ENCODE measurements at regions of chr15 and their contacts with region 1.

Region 1: DNA sequence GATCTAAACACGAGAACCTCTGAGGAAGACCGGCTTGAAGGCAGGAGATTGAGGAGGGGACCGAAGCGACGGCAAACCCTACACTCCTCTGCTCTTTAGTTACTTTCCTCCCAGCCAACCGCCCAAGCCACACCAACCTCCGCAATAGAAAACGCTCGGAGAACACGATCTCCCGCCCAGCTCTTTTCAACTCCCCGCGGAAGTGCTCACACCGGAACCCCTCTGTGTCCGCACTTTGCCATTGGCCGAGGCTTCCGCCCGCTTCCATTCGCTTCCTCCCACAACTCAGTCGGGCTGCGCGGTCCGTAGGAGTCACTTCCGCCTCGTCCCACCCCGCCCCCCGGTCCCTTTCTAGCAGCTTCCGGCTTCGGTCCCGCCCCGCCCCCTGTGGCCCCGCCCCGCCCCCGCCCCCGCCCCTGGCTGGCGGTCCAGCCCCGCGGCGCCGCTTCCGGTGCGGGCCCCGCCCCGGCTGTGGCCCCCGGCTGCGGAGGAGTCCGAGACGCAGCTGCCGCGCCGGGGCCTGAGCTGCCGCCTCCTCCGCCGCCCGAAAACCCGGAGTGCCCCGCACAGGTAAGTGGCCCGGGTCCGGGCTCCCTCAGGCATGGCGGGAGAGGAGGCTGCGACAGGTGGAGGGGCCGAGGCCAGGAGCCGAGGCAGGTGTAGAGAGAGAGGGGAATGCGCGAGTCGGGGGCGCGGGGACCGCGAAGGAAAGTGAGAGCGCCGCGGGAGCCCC is at the start of gene ARID3B:
- DNase-seq: peak; percentile 93
- ATAC-seq: peak; percentile 88
- H3K4me3 ChIP-seq: peak within 1 kb of the TSS; percentile 99
- H3K27ac ChIP-seq: peak within 1 kb of the TSS; percentile 95
- H3K4me1 ChIP-seq: peaks cover 9% of the 10 kb centered on the region
- H3K27me3 ChIP-seq: no peaks in the 10 kb centered on the region
- CTCF ChIP-seq: no peak
- EP300 ChIP-seq: no peak
- POLR2A ChIP-seq: peak; percentile 91
- RAD21 ChIP-seq: no peak
- polyA plus RNA-seq, gene ARID3B: 1.1 to 1.8 TPM

Region 2: DNA sequence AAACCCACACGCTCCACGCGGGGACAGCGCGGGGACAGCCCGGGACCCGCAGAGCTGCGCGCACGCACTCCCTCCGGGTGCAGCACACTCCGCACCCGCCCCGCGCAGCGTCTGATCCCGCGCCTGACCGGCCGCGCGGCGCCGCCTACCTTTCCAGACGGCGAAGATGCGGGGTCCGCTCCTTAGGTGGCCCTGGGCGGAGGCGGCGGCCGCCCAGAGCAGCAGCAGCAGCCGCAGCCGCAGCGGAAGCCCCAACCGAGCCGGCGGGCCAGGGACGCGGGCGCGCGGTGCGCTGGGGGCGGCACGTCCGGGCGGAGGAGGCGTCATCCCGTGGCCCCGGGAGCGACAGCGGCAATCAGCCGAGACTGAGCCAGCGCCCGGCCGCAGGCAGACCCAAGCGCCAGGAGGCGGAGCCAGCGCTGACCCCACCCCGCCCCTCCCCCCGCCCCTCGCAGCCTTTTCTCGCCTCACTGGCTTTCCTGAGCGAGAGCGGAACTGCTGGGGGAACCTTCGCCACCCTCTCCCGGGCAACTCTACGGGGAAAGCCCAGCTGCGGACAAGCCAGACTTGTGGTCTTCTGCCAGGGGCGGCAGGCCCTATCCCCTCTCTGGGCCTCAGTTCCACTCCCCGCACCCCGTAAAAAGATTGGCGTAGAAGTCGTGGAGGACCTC is 107.2 kb before region 1 on chr15 and contains the start of gene SEMA7A:
- CTCF ChIA-PET with region 1: interaction called, 6 read pairs
- POLR2A ChIA-PET with region 1: interaction called, 8 read pairs
- RAD21 ChIA-PET with region 1: interaction called, 3 read pairs
- SMC1A ChIA-PET with region 1: interaction called, 3 read pairs
- in situ Hi-C with region 1: no loop called
- intact Hi-C with region 1: loop called (anchors 5 kb)
- DNase-seq: peak; percentile 57
- ATAC-seq: peak; percentile 81
- H3K4me3 ChIP-seq: peak within 1 kb of the TSS; percentile 98
- H3K27ac ChIP-seq: peak within 1 kb of the TSS; percentile 87
- H3K4me1 ChIP-seq: peaks cover 32% of the 10 kb centered on the region
- H3K27me3 ChIP-seq: no peaks in the 10 kb centered on the region
- CTCF ChIP-seq: no peak
- EP300 ChIP-seq: peak in 1 of 2 experiments; percentile 25; a peak in 2 of 4 replicates
- POLR2A ChIP-seq: peak; percentile 98
- RAD21 ChIP-seq: no peak
- polyA plus RNA-seq, gene SEMA7A: 0.08 to 1.1 TPM

Region 3: GRCh38 chr15:74489518-74490338 is 51.2 kb before region 1 on chr15:
- CTCF ChIA-PET with region 1: interaction called, 7 read pairs
- POLR2A ChIA-PET with region 1: interaction called, 3 read pairs
- RAD21 ChIA-PET with region 1: interaction called, 5 read pairs
- SMC1A ChIA-PET with region 1: interaction called, 4 read pairs
- in situ Hi-C with region 1: no loop called
- intact Hi-C with region 1: loop called (anchors 2 kb)
- DNase-seq: peak; percentile 53
- ATAC-seq: peak; percentile 96
- H3K4me3 ChIP-seq: no peak overlapping the region
- H3K27ac ChIP-seq: peak overlapping the region; percentile 54
- H3K4me1 ChIP-seq: peaks cover 8% of the 10 kb centered on the region
- H3K27me3 ChIP-seq: no peaks in the 10 kb centered on the region
- CTCF ChIP-seq: peak; percentile 64 to 83 (median 82)
- EP300 ChIP-seq: no peak
- POLR2A ChIP-seq: peak; percentile 66; the same call in 1 of the 2 replicates
- RAD21 ChIP-seq: peak; percentile 65

Region 4: DNA sequence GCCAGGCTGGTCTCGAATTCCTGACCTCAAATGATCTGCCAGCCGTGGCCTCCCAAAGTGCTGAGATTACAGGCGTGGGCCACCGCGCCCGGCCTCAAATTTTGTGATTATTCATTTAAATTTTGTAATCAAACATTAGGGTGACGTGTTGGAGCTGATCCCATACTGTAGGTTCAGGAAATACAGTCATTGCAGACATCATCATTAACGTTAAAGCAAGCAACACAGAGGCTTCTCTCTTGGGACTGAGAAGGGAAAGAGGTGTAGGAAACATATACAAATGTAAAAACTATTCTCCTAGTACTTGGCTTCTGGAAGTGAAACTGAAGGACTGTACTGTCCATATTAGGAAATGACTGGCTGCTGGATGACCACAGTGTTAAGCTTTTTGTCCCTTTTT is 11.0 kb before region 1 on chr15:
- CTCF ChIA-PET with region 1: interaction called, 7 read pairs
- POLR2A ChIA-PET with region 1: interaction called, 7 read pairs
- RAD21 ChIA-PET with region 1: interaction called, 3 read pairs
- SMC1A ChIA-PET with region 1: interaction called, 10 read pairs
- in situ Hi-C with region 1: no loop called
- intact Hi-C with region 1: no loop called
- DNase-seq: no peak
- ATAC-seq: peak; percentile 48
- H3K4me3 ChIP-seq: no peak overlapping the region
- H3K27ac ChIP-seq: no peak overlapping the region
- H3K4me1 ChIP-seq: no peaks in the 10 kb centered on the region
- H3K27me3 ChIP-seq: no peaks in the 10 kb centered on the region
- CTCF ChIP-seq: no peak
- EP300 ChIP-seq: no peak
- POLR2A ChIP-seq: no peak
- RAD21 ChIP-seq: no peak

Region 5: GRCh38 chr15:74615508-74616365 is 74.8 kb after region 1 on chr15 and contains the start of gene CLK3:
- CTCF ChIA-PET with region 1: interaction called, 5 read pairs
- POLR2A ChIA-PET with region 1: interaction called, 30 read pairs
- RAD21 ChIA-PET with region 1: interaction called, 9 read pairs
- SMC1A ChIA-PET with region 1: interaction called, 10 read pairs
- in situ Hi-C with region 1: no loop called
- intact Hi-C with region 1: loop called (anchors 5 kb)
- DNase-seq: peak; percentile 79
- ATAC-seq: peak; percentile 89
- H3K4me3 ChIP-seq: peak within 1 kb of the TSS; percentile 89
- H3K27ac ChIP-seq: peak within 1 kb of the TSS; percentile 97
- H3K4me1 ChIP-seq: peaks cover 17% of the 10 kb centered on the region
- H3K27me3 ChIP-seq: no peaks in the 10 kb centered on the region; a peak in 1 of 4 replicates
- CTCF ChIP-seq: no peak
- EP300 ChIP-seq: peak in 1 of 2 experiments; percentile 11; a peak in 1 of 4 replicates
- POLR2A ChIP-seq: peak; percentile 75
- RAD21 ChIP-seq: no peak
- polyA plus RNA-seq, gene CLK3: 3.3 to 5.8 TPM

Region 6: GRCh38 chr15:74674119-74674518 is 133.2 kb after region 1 on chr15:
- CTCF ChIA-PET with region 1: no interaction called
- POLR2A ChIA-PET with region 1: no interaction called
- RAD21 ChIA-PET with region 1: no interaction called
- SMC1A ChIA-PET with region 1: no interaction called
- in situ Hi-C with region 1: no loop called
- intact Hi-C with region 1: no loop called
- DNase-seq: no peak
- ATAC-seq: no peak
- H3K4me3 ChIP-seq: no peak overlapping the region
- H3K27ac ChIP-seq: no peak overlapping the region
- H3K4me1 ChIP-seq: no peaks in the 10 kb centered on the region
- H3K27me3 ChIP-seq: no peaks in the 10 kb centered on the region
- CTCF ChIP-seq: no peak
- EP300 ChIP-seq: no peak
- POLR2A ChIP-seq: no peak
- RAD21 ChIP-seq: no peak